ENCODE measurements at regions of chr10 and their contacts with region 1.

Region 1: DNA sequence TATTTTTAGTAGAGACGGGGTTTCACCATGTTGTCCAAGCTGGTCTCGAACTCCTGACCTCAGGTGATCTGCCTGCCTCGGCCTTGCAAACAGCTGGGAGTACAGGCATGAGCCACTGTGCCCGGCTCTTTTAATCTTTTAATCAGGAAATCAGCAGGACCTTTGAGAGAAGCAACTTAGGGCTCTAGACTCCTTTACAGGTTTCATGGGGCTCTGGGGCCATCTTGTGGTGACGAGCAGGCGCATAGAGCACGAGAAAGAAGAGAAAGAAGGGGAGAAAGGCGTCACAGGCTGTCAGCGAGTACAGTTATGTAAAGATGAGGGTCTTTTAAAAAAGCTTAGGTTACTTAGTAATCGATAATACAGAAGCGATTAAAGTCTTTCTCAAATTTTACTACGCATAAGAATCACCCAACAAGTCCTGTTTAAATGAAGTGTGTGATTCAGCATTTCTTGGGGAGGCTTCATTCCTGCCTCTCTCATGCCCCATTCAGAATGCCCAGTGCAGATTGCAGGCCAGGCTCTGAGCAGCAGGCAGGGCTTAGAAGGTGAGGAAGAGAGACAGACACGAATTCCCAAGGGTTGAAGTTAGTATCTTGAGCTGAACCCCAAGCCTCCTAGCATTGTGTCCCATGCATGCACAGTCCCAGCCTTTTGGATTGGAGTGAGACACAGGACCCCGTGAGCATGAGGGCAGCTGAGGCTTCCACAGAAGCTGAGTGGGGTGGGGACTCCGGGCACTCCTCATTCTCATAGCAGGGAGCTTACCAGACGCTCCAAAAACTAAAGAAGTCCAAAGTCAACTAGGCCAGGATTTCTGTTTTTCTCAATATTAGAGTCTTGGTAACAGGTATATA is 23.6 kb upstream of the PFKP start:
- DNase-seq: peak in 1 of 2 experiments; percentile 49
- H3K4me3 ChIP-seq: no peak overlapping the region
- H3K27ac ChIP-seq: no peak overlapping the region
- H3K4me1 ChIP-seq: peaks cover 0 to 21% (median 11%) of the 10 kb centered on the region in 4 experiments; a peak in 5 of 7 replicates
- H3K27me3 ChIP-seq: no peaks in the 10 kb centered on the region
- CTCF ChIP-seq: peak; percentile 60 to 79 (median 77)
- EP300 ChIP-seq: no peak
- POLR2A ChIP-seq: no peak
- RAD21 ChIP-seq: peak; percentile 94 to 96

Region 2: DNA sequence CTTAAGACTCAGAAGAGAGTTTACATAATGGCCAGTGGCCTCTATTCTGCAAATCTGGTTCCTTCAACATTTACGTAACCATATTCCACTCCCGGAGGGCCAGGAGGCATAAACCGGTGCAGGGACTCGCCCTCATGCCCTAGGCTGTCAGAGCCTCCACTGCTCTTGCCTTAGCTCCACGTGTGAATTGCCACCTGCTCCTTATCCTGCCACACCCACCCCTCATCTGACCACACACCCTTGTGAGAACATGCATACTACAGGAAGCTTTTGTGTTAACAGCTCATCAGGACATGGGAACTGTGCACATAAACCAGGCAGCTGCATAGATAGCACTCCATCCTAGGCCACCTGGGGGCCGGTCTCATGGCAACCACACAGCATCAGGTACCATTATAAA is 123.1 kb before region 1 on chr10:
- CTCF ChIA-PET with region 1: interaction called, 28 read pairs
- POLR2A ChIA-PET with region 1: no interaction called
- DNase-seq: no peak
- H3K4me3 ChIP-seq: no peak overlapping the region
- H3K27ac ChIP-seq: no peak overlapping the region
- H3K4me1 ChIP-seq: peaks cover 0 to 6% (median 5%) of the 10 kb centered on the region in 4 experiments; a peak in 5 of 7 replicates
- H3K27me3 ChIP-seq: no peaks in the 10 kb centered on the region
- CTCF ChIP-seq: no peak
- EP300 ChIP-seq: no peak
- POLR2A ChIP-seq: no peak
- RAD21 ChIP-seq: no peak

Region 3: GRCh38 chr10:2938869-2939268 is 104.9 kb before region 1 on chr10:
- CTCF ChIA-PET with region 1: interaction called, 11 read pairs
- POLR2A ChIA-PET with region 1: no interaction called
- DNase-seq: no peak
- H3K4me3 ChIP-seq: no peak overlapping the region
- H3K27ac ChIP-seq: no peak overlapping the region
- H3K4me1 ChIP-seq: peaks cover 0 to 3% (median 0%) of the 10 kb centered on the region in 4 experiments; a peak in 1 of 7 replicates
- H3K27me3 ChIP-seq: peaks cover 0 to 2% (median 0%) of the 10 kb centered on the region in 4 experiments; a peak in 1 of 7 replicates
- CTCF ChIP-seq: no peak
- EP300 ChIP-seq: no peak
- POLR2A ChIP-seq: no peak
- RAD21 ChIP-seq: no peak

Region 4: DNA sequence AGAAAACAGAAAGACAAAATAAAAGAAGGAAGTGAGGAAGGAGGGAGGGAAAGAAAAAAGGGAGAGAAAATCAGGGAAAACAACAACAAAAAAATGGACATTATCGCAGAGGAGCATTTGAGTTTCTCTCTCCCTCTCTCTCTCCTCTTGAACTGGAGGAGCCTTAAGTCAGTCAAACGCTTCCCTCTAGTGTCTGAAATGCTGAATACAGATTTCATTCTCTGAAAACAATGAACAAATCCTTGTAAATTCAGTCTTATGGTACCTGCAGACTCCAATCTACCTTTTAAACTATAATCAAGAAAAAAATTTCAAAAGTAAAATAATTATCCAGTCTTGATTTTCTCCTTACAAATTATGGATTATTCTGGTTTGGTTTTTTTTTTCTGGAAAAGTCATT is 65.6 kb before region 1 on chr10:
- CTCF ChIA-PET with region 1: interaction called, 21 read pairs
- POLR2A ChIA-PET with region 1: no interaction called
- DNase-seq: no peak
- H3K4me3 ChIP-seq: no peak overlapping the region
- H3K27ac ChIP-seq: no peak overlapping the region
- H3K4me1 ChIP-seq: 0 out of 7 replicates have a peak, but pooled peaks cover 0 to 2% (median 0%) of the 10 kb centered on the region in 4 experiments
- H3K27me3 ChIP-seq: no peaks in the 10 kb centered on the region
- CTCF ChIP-seq: peak in 2 of 3 experiments; percentile 59 to 61; a peak in 3 of 4 replicates
- EP300 ChIP-seq: no peak
- POLR2A ChIP-seq: no peak
- RAD21 ChIP-seq: peak; percentile 92 to 94

Region 5: GRCh38 chr10:3028441-3028840 is 15.3 kb before region 1 on chr10:
- CTCF ChIA-PET with region 1: interaction called, 10 read pairs
- POLR2A ChIA-PET with region 1: interaction called, 4 read pairs
- DNase-seq: no peak
- H3K4me3 ChIP-seq: no peak overlapping the region
- H3K27ac ChIP-seq: no peak overlapping the region
- H3K4me1 ChIP-seq: no peaks in the 10 kb centered on the region
- H3K27me3 ChIP-seq: no peaks in the 10 kb centered on the region
- CTCF ChIP-seq: no peak
- EP300 ChIP-seq: no peak
- POLR2A ChIP-seq: no peak
- RAD21 ChIP-seq: no peak

Region 6: DNA sequence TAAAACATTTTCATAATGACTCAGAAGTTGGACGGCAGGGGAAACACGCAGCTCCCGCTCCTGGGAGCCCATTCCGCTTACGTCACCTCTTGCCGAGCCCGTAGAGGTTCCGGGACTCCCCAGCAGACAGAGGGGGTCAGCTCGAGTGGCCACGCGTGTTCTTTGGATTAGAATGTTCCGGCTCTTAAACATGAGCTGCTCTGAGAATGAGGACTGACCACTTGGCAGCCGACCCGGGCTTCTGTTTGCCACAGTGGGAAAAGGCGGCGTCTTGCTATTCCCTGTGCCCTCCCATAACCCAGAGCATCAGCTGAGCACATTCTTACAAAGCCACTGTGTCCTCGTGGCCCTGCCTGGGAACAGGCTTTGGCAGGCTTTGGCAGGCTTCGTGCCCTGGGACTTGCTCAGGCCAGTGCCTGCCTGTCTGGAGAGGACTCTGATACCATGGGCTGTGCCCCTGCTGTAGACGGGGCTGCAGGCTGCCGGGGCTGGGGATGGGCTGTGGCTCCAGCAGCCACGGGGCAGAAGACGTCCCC is 63.8 kb after region 1 on chr10:
- CTCF ChIA-PET with region 1: no interaction called
- POLR2A ChIA-PET with region 1: no interaction called
- DNase-seq: no peak
- H3K4me3 ChIP-seq: no peak overlapping the region
- H3K27ac ChIP-seq: no peak overlapping the region
- H3K4me1 ChIP-seq: peaks cover 0 to 4% (median 0%) of the 10 kb centered on the region in 4 experiments; a peak in 1 of 7 replicates
- H3K27me3 ChIP-seq: no peaks in the 10 kb centered on the region
- CTCF ChIP-seq: no peak
- EP300 ChIP-seq: no peak
- POLR2A ChIP-seq: no peak
- RAD21 ChIP-seq: no peak

Region 7: GRCh38 chr10:3619241-3619640 is 575.5 kb after region 1 on chr10:
- CTCF ChIA-PET with region 1: no interaction called
- POLR2A ChIA-PET with region 1: no interaction called
- DNase-seq: no peak
- H3K4me3 ChIP-seq: no peak overlapping the region
- H3K27ac ChIP-seq: no peak overlapping the region
- H3K4me1 ChIP-seq: peaks cover 0 to under 1% (median 0%) of the 10 kb centered on the region in 4 experiments; a peak in 2 of 7 replicates
- H3K27me3 ChIP-seq: no peaks in the 10 kb centered on the region; a peak in 1 of 7 replicates
- CTCF ChIP-seq: no peak
- EP300 ChIP-seq: no peak
- POLR2A ChIP-seq: no peak
- RAD21 ChIP-seq: no peak

Measured in H1 (cell line).